AG04449 (cell line): ENCODE measurements at regions of chr9 and their contacts with region 1.

Region 1: GRCh38 chr9:134455934-134456739 is 129.9 kb downstream of the RXRA start:
- DNase-seq: peak; percentile 97
- H3K4me3 ChIP-seq: 0 out of 2 replicates have a peak overlapping the region, but pooled peaks have one; percentile 8
- CTCF ChIP-seq: no peak

Region 2: GRCh38 chr9:134624827-134625181 is 168.7 kb after region 1 on chr9:
- CTCF ChIA-PET with region 1: interaction called, 3 read pairs
- POLR2A ChIA-PET with region 1: interaction called, 16 read pairs
- DNase-seq: peak; percentile 71
- H3K4me3 ChIP-seq: no peak overlapping the region
- CTCF ChIP-seq: no peak